Calu3 (cell line): ENCODE measurements at regions of chr6 and their contacts with region 1.

Region 1: GRCh38 chr6:98054453-98054852 is 771.4 kb upstream of the MMS22L start:
- DNase-seq: no peak
- H3K4me3 Mint-ChIP-seq: no peak overlapping the region
- H3K27ac Mint-ChIP-seq: no peak overlapping the region
- H3K4me1 Mint-ChIP-seq: no peaks in the 10 kb centered on the region
- H3K27me3 Mint-ChIP-seq: no peaks in the 10 kb centered on the region
- CTCF ChIP-seq: no peak

Region 2: DNA sequence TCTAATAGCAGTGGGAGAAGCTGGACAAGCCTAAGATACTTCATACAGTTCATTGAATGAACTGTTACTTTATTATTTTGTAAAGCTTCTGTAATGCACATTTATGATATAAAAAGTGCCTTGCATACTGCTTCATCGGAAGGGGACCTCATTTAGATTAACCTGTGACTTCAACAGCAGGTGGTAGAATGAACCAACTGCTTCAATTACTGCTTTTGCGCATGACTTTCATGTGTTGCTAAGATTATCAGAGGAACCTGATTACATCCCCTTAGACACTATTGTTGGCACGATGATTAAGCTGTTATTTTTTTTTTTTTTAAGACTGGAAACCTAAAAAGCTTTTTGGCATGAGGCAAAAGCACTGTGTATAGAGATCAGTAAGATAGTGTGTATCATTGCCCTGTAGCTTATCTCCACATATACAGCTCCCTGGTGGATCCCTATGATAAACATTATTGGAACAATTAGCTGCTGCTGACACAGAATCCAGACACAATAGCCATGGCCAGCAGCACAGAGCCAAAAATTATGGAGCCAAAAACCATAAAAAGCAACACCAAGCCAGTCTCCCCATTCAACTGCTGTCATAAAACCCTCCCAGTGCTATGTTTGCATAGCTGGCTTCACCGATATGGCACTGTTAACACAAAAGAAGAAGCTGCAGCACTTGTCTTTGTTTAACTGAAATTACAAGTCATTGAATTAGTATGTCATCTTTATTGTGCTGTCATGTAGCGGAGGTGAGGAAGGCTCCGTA is 39.8 kb before region 1 on chr6:
- CTCF ChIA-PET with region 1: no interaction called
- intact Hi-C with region 1: no loop called
- DNase-seq: no peak
- H3K4me3 Mint-ChIP-seq: no peak overlapping the region
- H3K27ac Mint-ChIP-seq: no peak overlapping the region
- H3K4me1 Mint-ChIP-seq: no peaks in the 10 kb centered on the region
- H3K27me3 Mint-ChIP-seq: no peaks in the 10 kb centered on the region
- CTCF ChIP-seq: no peak

Region 3: GRCh38 chr6:98514073-98514720 is 459.7 kb after region 1 on chr6:
- CTCF ChIA-PET with region 1: no interaction called
- intact Hi-C with region 1: loop called (anchors 10 kb)
- DNase-seq: no peak
- H3K4me3 Mint-ChIP-seq: no peak overlapping the region
- H3K27ac Mint-ChIP-seq: no peak overlapping the region
- H3K4me1 Mint-ChIP-seq: no peaks in the 10 kb centered on the region
- H3K27me3 Mint-ChIP-seq: peaks cover 13% of the 10 kb centered on the region
- CTCF ChIP-seq: no peak